Activated CD4-positive, alpha-beta memory T cell treated with anti-CD3 and anti-CD28 coated beads for 36 hours (primary cell): ENCODE measurements at regions of chr16 and their contacts with region 1.

Region 1: DNA sequence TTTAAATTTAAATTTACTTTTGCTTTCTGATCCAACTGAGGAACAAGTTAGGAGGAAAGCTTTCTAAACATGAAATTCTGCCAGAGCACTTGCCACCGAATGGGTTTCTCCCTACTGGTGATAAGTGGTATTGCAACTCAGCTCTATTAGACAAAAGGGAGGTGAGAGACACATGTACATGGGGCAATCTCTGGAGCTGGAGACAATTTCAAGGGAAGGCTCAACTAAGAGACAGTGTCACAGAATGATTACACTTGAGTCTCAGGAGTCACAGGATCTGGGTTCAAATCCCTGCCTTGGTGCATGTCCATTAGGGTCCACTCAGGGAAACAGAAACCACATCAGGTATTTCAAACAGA is 37.4 kb downstream of the SOCS1 start:
- DNase-seq: no peak
- H3K4me3 Mint-ChIP-seq: no peak overlapping the region
- H3K27ac Mint-ChIP-seq: no peak overlapping the region
- H3K4me1 Mint-ChIP-seq: peaks cover 18% of the 10 kb centered on the region
- H3K27me3 Mint-ChIP-seq: no peaks in the 10 kb centered on the region

Region 2: DNA sequence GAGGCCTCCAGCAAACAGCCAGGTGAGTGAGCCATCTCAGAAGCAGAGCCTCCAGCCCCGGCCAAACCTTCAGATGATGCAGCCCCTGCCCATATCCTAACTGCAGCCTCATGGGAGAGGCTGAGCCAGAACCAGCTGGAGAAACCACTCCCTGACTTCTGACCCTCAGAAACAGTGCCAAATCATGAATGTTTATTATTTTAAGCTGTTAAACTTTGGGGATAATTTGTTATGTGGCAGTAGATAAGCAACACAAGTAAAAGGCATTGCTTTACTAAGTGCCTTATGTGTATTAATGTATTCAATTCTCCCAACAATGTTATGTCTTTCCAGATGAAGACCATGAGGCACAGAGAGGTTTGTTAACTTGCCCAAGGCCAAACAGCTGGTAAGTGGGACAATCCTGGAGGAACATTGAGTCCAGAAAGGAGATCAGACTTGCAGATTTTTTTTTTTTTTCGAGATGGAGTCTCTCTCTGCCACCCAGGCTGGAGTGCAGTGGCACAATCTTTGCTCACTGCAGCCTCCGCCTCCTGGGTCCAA is 22.2 kb before region 1 on chr16:
- CTCF ChIA-PET with region 1: interaction called, 11 read pairs
- POLR2A ChIA-PET with region 1: no interaction called
- intact Hi-C with region 1: no loop called
- DNase-seq: no peak
- H3K4me3 Mint-ChIP-seq: no peak overlapping the region
- H3K27ac Mint-ChIP-seq: no peak overlapping the region
- H3K4me1 Mint-ChIP-seq: peaks cover 18% of the 10 kb centered on the region
- H3K27me3 Mint-ChIP-seq: no peaks in the 10 kb centered on the region

Region 3: GRCh38 chr16:11205754-11206581 is 12.6 kb before region 1 on chr16:
- CTCF ChIA-PET with region 1: interaction called, 13 read pairs
- POLR2A ChIA-PET with region 1: interaction called, 3 read pairs
- intact Hi-C with region 1: no loop called
- DNase-seq: peak; percentile 62
- H3K4me3 Mint-ChIP-seq: no peak overlapping the region
- H3K27ac Mint-ChIP-seq: peak overlapping the region; percentile 91
- H3K4me1 Mint-ChIP-seq: peaks cover 29% of the 10 kb centered on the region
- H3K27me3 Mint-ChIP-seq: no peaks in the 10 kb centered on the region